ENCODE measurements at regions of chr6 and their contacts with region 1.

Region 1: GRCh38 chr6:77926198-77926752 is 273.4 kb downstream of the MEI4 start:
- DNase-seq: peak; percentile 54
- ATAC-seq: peak; percentile 89
- H3K4me3 ChIP-seq: no peak overlapping the region
- H3K27ac ChIP-seq: no peak overlapping the region
- H3K4me1 ChIP-seq: no peaks in the 10 kb centered on the region
- H3K27me3 ChIP-seq: no peaks in the 10 kb centered on the region
- CTCF ChIP-seq: peak; percentile 78
- EP300 ChIP-seq: no peak
- POLR2A ChIP-seq: no peak
- RAD21 ChIP-seq: peak; percentile 80

Region 2: DNA sequence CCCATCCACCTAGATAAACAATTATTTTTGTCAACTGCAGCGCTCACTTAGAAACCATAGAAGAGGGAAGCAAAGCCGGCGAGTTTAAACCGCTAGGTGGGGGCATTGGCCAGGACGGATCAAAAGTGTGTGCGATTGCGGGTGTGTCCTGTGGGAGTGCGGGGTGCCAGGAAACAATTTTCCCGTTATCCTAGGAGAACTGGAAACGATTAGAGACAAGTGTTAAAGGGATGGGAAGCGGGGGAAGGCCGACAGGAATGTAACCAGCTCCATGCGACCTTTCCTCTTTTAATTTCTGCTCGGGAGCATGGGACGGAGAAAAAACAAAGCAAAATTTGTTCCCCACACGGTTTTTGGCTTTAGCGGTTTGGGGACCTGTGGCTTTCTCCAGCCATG is 460.2 kb before region 1 on chr6:
- CTCF ChIA-PET with region 1: no interaction called
- POLR2A ChIA-PET with region 1: no interaction called
- in situ Hi-C with region 1: no loop called
- intact Hi-C with region 1: loop called (anchors 5 kb)
- DNase-seq: peak; percentile 20
- ATAC-seq: peak; percentile 93
- H3K4me3 ChIP-seq: no peak overlapping the region
- H3K27ac ChIP-seq: no peak overlapping the region
- H3K4me1 ChIP-seq: no peaks in the 10 kb centered on the region
- H3K27me3 ChIP-seq: peaks cover 1 to 44% of the 10 kb centered on the region in 2 experiments; a peak in 3 of 5 replicates
- CTCF ChIP-seq: peak; percentile 63
- EP300 ChIP-seq: no peak
- POLR2A ChIP-seq: no peak
- RAD21 ChIP-seq: no peak

Region 3: DNA sequence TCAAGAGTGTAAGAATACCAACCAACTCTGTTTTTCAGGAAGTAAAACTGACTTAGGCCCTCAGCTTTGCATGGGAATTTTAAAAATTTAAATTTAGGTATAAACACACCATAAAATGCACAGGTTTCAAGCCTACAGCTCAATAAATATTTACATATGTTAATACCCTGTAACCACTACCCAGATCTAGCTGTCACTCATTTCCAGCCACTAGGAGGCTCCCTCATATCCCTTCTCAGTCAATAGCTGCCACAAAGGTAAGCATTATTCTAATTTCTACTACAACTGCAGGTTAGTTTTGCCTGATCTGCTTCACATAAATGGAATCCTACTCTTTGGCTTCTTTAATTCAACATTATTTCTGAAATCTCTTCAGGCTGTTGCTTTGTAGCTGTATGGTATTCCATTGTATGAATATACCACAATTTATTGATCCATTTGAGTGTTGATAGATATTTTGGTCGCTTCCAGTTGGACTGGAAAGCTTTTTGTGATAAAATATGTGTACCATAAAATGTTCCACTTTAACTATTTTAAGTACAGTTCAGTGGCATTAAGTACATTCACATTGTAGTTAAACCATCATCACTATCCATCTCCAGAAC is 305.9 kb before region 1 on chr6:
- CTCF ChIA-PET with region 1: interaction called, 6 read pairs
- POLR2A ChIA-PET with region 1: no interaction called
- in situ Hi-C with region 1: no loop called
- intact Hi-C with region 1: loop called (anchors 1 kb)
- DNase-seq: peak; percentile 8
- ATAC-seq: peak; percentile 85
- H3K4me3 ChIP-seq: no peak overlapping the region
- H3K27ac ChIP-seq: no peak overlapping the region
- H3K4me1 ChIP-seq: no peaks in the 10 kb centered on the region
- H3K27me3 ChIP-seq: no peaks in the 10 kb centered on the region
- CTCF ChIP-seq: peak; percentile 53
- EP300 ChIP-seq: no peak
- POLR2A ChIP-seq: no peak
- RAD21 ChIP-seq: no peak

Region 4: GRCh38 chr6:77740380-77740779 is 185.9 kb before region 1 on chr6:
- CTCF ChIA-PET with region 1: interaction called, 38 read pairs
- POLR2A ChIA-PET with region 1: no interaction called
- in situ Hi-C with region 1: loop called (anchors 10 kb)
- intact Hi-C with region 1: loop called (anchors 1 kb)
- DNase-seq: peak; percentile 18
- ATAC-seq: no peak
- H3K4me3 ChIP-seq: no peak overlapping the region
- H3K27ac ChIP-seq: no peak overlapping the region
- H3K4me1 ChIP-seq: no peaks in the 10 kb centered on the region
- H3K27me3 ChIP-seq: no peaks in the 10 kb centered on the region
- CTCF ChIP-seq: peak; percentile 49
- EP300 ChIP-seq: no peak
- POLR2A ChIP-seq: no peak
- RAD21 ChIP-seq: peak; percentile 38; the same call in 1 of the 2 replicates

Region 5: DNA sequence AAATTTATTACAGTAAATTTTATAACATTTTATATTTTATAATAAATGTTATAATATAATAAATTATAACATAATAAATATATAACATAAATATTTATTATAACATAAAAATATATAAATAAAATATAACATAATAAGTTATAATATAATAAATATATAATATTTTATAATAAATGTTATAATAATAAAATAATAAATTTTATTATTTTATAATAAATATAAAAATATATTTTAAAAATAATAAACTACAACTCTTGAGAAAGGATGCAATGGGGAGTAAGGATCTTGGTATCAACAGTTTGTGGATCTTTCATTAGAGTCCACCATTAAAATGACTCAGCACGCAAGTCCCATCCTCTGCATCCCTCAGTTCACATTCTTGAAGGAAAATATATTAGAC is 39.2 kb after region 1 on chr6:
- CTCF ChIA-PET with region 1: no interaction called
- POLR2A ChIA-PET with region 1: no interaction called
- in situ Hi-C with region 1: no loop called
- intact Hi-C with region 1: no loop called
- DNase-seq: no peak
- ATAC-seq: no peak
- H3K4me3 ChIP-seq: no peak overlapping the region
- H3K27ac ChIP-seq: no peak overlapping the region
- H3K4me1 ChIP-seq: no peaks in the 10 kb centered on the region
- H3K27me3 ChIP-seq: no peaks in the 10 kb centered on the region
- CTCF ChIP-seq: no peak
- EP300 ChIP-seq: no peak
- POLR2A ChIP-seq: no peak
- RAD21 ChIP-seq: no peak

Measured in HepG2 (cell line).